Activated CD4-positive, alpha-beta memory T cell treated with anti-CD3 and anti-CD28 coated beads, Interleukin-2, amount 10 ng/mL, durations not matched to agents 7 days and 5 days (primary cell): ENCODE measurements at regions of chr3 and their contacts with region 1.

Region 1: DNA sequence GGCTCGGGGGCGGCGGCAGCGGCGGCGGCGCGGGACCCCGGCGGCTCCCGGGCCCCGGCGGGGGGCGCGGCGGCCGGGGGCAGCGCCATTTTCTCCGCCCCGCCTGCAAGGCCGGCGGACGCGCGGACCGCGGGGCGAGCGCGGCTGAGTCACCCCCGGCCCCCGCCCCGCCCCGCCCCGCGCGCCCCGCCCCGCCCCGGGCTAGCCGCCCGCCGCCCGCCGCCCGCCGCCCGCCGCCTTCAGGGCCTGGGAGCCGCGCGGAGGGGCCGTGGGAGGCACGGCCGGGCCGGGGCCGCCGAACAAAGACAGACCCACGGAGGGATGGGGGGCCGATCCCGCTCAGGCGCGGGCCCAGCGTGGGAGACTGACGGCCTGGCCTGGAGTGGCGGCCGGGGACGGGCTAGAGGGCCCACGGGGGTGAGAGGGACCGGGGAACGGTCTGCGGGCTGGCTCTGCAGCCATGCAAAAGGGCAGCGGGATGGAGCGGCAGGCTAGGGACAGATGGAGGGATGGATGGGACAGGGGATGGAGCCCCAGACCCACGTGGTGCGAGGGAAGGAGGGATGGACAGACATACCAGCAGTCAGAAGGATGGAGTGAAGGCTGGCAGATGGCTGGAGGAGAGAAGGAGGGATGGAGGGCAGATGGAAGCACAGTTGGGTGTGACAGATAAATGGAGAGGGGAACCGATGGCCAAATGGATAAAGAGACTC is at the start of gene EIF4E3:
- DNase-seq: peak; percentile 50
- H3K4me3 Mint-ChIP-seq: peak within 1 kb of the TSS; percentile 94
- H3K27ac Mint-ChIP-seq: peak within 1 kb of the TSS; percentile 94
- H3K4me1 Mint-ChIP-seq: peaks cover 69% of the 10 kb centered on the region
- H3K27me3 Mint-ChIP-seq: no peaks in the 10 kb centered on the region
- total RNA-seq, gene EIF4E3: 76.9 TPM

Region 2: DNA sequence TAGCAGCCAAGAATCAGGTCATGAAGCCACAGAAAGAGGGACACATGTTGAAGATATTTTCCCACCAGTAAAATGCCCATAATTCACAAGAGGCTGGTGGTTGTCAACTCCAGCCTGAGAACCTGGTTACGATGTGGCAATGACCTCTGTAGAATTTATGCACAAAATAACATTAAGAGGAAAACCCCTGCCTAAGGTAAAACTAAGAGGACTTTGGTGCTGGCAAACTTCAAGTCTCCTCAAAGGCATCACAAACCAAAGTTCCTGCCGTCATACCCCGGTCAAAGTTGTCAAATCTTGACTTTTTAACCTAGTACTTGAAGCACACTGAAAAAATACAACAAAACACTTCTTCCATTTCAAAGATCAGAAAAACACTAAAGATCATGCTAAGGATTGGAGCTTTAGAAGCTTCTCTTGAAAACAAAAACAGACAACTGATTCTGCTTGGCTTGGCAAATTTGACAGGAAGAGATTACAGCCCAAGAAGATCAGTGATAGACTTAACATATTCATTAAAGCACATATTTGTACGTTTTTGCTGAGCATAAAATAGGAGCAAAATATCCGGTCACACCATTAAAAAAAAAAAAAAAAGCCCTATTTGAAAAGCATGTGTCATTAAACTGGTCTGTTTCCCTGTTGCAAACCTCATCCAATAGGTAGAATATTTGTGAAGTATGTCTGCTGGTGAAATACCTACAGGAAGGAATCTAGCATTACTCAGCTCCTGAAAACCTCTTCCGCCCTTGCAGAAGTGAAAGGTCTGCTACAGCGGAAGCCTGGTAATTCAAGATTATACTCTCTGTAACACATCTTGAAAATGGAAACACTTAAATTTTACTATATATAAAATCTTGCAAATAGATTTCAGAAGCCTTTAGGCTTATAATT is 23.1 kb before region 1 on chr3:
- CTCF ChIA-PET with region 1: interaction called, 3 read pairs
- POLR2A ChIA-PET with region 1: interaction called, 11 read pairs
- DNase-seq: peak; percentile 60
- H3K4me3 Mint-ChIP-seq: peak overlapping the region; percentile 64
- H3K27ac Mint-ChIP-seq: peak overlapping the region; percentile 95
- H3K4me1 Mint-ChIP-seq: peaks cover 65% of the 10 kb centered on the region
- H3K27me3 Mint-ChIP-seq: no peaks in the 10 kb centered on the region

Region 3: GRCh38 chr3:71710906-71711494 is 14.4 kb before region 1 on chr3:
- CTCF ChIA-PET with region 1: interaction called, 26 read pairs
- POLR2A ChIA-PET with region 1: interaction called, 9 read pairs
- DNase-seq: no peak
- H3K4me3 Mint-ChIP-seq: no peak overlapping the region
- H3K27ac Mint-ChIP-seq: no peak overlapping the region
- H3K4me1 Mint-ChIP-seq: peaks cover 67% of the 10 kb centered on the region
- H3K27me3 Mint-ChIP-seq: no peaks in the 10 kb centered on the region

Region 4: DNA sequence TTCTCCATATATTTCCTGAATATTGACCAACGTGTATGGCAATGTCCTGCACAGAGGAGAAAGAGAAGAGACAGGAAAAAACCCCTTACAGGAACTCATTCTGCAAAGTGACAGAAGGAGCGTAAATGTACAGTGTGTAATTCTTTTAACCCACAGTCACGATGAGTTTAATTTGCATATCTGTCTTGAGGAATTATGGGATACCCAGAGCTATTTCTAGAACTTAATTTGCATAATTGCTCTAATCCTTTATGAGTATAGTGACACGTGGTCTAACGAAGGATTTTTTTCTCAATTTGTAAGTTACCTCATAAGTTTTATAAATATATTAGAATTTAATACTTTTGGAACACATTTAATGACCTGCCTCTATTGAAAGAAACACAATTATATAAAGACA is 38.0 kb after region 1 on chr3:
- CTCF ChIA-PET with region 1: no interaction called
- POLR2A ChIA-PET with region 1: no interaction called
- DNase-seq: no peak
- H3K4me3 Mint-ChIP-seq: no peak overlapping the region
- H3K27ac Mint-ChIP-seq: no peak overlapping the region
- H3K4me1 Mint-ChIP-seq: no peaks in the 10 kb centered on the region
- H3K27me3 Mint-ChIP-seq: peaks cover 17% of the 10 kb centered on the region

Region 5: GRCh38 chr3:71779674-71780377 is 54.4 kb after region 1 on chr3:
- CTCF ChIA-PET with region 1: interaction called, 10 read pairs
- POLR2A ChIA-PET with region 1: interaction called, 3 read pairs
- DNase-seq: peak; percentile 21
- H3K4me3 Mint-ChIP-seq: no peak overlapping the region
- H3K27ac Mint-ChIP-seq: peak overlapping the region; percentile 77
- H3K4me1 Mint-ChIP-seq: peaks cover 61% of the 10 kb centered on the region
- H3K27me3 Mint-ChIP-seq: peaks cover 33% of the 10 kb centered on the region

Region 6: GRCh38 chr3:71859123-71859519 is 133.7 kb after region 1 on chr3:
- CTCF ChIA-PET with region 1: interaction called, 49 read pairs
- POLR2A ChIA-PET with region 1: interaction called, 3 read pairs
- DNase-seq: no peak
- H3K4me3 Mint-ChIP-seq: no peak overlapping the region
- H3K27ac Mint-ChIP-seq: no peak overlapping the region
- H3K4me1 Mint-ChIP-seq: peaks cover 7% of the 10 kb centered on the region
- H3K27me3 Mint-ChIP-seq: peaks cover 13% of the 10 kb centered on the region